B cell (primary cell): ENCODE measurements at regions of chr12 and their contacts with region 1.

Region 1: GRCh38 chr12:569803-570434 is 93.3 kb downstream of the NINJ2 start:
- DNase-seq: peak; percentile 87
- ATAC-seq: peak; percentile 97
- H3K4me3 ChIP-seq: peak overlapping the region; percentile 21 to 72 (median 53)
- H3K4me3 Mint-ChIP-seq: peak overlapping the region; percentile 91
- H3K27ac ChIP-seq: no peak overlapping the region
- H3K27ac Mint-ChIP-seq: peak overlapping the region; percentile 32
- H3K4me1 ChIP-seq: peaks cover 4 to 14% of the 10 kb centered on the region in 2 donors
- H3K4me1 Mint-ChIP-seq: peaks cover 4% of the 10 kb centered on the region
- H3K27me3 ChIP-seq: no peaks in the 10 kb centered on the region
- H3K27me3 Mint-ChIP-seq: no peaks in the 10 kb centered on the region
- CTCF ChIP-seq: peak; percentile 94

Region 2: DNA sequence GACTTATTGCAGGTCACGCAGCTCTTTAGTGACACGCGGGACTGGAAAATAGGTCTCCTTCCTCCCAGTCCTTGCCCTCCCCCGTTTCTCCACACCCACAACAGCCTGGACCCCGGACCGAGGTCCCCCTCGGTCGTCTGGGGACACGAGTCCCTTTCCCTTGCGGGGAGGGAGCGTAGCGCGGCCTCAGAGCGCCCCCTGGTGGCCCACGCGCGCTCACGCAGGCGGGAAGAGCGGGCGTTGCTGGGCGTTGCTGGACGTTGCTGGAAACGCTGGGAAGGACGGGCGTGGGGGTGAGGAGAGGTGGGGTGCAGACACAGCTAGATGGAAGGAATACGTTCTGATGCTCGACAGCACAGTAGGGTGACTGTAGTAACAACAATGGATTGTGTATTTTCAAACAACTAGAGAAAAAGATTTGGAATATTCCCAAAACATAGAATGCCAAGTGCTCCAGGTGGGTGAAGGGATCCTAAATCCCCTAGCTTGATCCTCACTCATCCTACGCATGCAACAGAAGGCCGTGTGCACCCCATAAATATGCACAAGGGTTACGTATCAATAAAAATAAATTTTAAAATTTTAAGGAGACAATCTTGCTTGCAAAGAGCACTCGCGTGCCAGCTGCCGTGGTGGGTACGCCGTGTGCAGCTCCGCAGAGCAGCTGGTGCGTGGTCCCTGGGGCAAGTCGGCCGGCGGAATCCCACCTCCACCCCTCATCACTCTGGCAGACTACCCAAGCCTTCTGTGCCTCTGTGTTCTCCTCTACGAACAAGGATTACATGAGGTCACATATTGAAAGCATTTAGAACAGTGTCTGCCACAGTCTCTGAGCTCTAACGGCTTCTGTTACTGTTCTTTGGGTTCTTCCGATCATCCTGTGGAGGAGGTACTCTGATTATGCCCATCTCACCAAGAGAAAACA is 22.7 kb before region 1 on chr12:
- CTCF ChIA-PET with region 1: no interaction called
- POLR2A ChIA-PET with region 1: no interaction called
- intact Hi-C with region 1: no loop called
- DNase-seq: peak; percentile 68
- ATAC-seq: peak; percentile 62
- H3K4me3 ChIP-seq: no peak overlapping the region
- H3K4me3 Mint-ChIP-seq: no peak overlapping the region
- H3K27ac ChIP-seq: no peak overlapping the region
- H3K27ac Mint-ChIP-seq: no peak overlapping the region
- H3K4me1 ChIP-seq: peaks cover 8 to 10% of the 10 kb centered on the region in 2 donors
- H3K4me1 Mint-ChIP-seq: peaks cover 3% of the 10 kb centered on the region
- H3K27me3 ChIP-seq: peaks cover 0 to 34% (median 3%) of the 10 kb centered on the region in 4 experiments
- H3K27me3 Mint-ChIP-seq: peaks cover 38% of the 10 kb centered on the region
- CTCF ChIP-seq: peak; percentile 95

Region 3: DNA sequence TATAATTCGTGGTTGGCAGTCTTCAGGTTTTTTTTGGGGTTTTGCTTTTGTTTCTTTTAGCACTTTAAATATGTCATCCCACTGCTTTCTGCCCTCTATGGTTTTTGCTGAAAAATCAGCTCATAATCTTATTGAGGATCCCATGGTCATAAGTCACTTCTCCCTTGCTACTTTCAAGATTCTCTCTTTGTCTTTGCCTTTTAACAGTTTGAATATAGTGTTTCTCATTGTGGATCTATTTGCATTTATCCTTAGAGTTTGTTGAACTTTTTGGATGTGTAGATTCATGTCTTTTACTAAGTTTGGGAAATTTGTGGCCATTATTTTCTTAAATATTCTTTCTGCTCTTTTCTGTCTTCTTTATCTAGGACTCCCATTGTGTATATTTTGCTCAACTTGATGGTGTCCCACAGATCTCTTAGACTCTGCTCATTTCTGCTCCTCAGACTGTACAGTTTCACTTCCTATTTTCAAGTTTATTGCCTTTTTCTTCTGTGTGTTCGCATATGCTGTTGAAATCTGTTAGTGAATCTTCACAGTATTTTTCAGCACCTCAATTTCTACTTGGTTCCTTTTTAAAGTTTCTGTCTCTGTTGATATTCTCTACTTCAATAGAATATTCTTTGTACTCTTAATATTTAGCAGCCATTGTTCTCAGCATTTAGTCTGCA is 253.2 kb after region 1 on chr12:
- CTCF ChIA-PET with region 1: interaction called, 151 read pairs
- POLR2A ChIA-PET with region 1: no interaction called
- intact Hi-C with region 1: no loop called
- DNase-seq: peak; percentile 78
- ATAC-seq: peak; percentile 94
- H3K4me3 ChIP-seq: no peak overlapping the region
- H3K4me3 Mint-ChIP-seq: peak overlapping the region; percentile 1
- H3K27ac ChIP-seq: peak overlapping the region; percentile 40 to 57
- H3K27ac Mint-ChIP-seq: peak overlapping the region; percentile 32
- H3K4me1 ChIP-seq: peaks cover 16 to 23% of the 10 kb centered on the region in 2 donors
- H3K4me1 Mint-ChIP-seq: peaks cover 35% of the 10 kb centered on the region
- H3K27me3 ChIP-seq: no peaks in the 10 kb centered on the region
- H3K27me3 Mint-ChIP-seq: no peaks in the 10 kb centered on the region
- CTCF ChIP-seq: no peak